ENCODE measurements at regions of chr2 and their contacts with region 1.

Region 1: GRCh38 chr2:241508240-241509154 is at the start of gene STK25:
- DNase-seq: peak; percentile 98
- H3K4me3 ChIP-seq: peak within 1 kb of the TSS; percentile 91 to 99 (median 95)
- H3K27ac ChIP-seq: peak within 1 kb of the TSS; percentile 91 to 95 (median 92)
- H3K4me1 ChIP-seq: peaks cover 18 to 30% (median 25%) of the 10 kb centered on the region in 4 donors
- H3K27me3 ChIP-seq: no peaks in the 10 kb centered on the region
- CTCF ChIP-seq: no peak
- EP300 ChIP-seq: no peak
- POLR2A ChIP-seq: peak; percentile 65
- total RNA-seq, gene STK25: 159 to 427 (median 205) TPM

Region 2: DNA sequence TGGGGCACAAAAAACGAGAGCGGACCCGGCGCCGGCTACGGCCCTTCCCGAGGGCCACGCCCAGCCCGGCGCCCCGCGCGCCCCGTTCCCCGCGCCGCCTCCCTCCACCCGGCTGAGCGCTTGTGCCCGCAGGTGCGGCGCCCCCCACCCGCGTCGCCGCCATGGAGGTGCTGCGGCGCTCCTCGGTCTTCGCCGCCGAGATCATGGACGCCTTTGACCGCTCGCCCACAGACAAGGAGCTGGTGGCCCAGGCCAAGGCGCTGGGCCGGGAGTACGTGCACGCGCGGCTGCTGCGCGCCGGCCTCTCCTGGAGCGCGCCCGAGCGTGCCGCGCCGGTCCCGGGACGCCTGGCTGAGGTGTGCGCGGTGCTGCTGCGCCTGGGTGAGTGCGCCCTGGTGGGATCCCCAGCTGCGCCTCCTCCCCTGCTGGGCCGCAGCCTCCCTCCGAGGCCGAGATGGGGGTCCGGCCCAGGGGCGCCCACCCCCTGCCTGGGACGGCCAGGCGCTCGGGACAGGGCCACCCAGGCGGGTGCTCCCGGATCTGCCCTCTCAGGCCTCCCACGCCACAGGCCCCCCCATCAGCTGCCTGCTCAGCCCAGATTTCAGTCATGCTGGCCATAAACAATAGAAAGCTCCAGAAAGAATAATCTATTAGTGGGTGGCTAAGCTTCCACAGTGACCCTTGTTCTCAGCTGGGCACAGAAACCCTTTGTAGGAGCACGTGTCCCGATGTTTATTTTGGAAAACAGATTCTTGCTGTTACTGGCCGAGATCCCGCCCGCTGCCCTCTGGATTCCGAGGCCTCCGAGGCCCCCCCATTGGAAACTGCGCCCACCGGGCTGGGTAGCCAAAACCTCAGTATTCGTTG is 51.1 kb after region 1 on chr2:
- in situ Hi-C with region 1: no loop called
- intact Hi-C with region 1: loop called (anchors 5 kb)
- DNase-seq: peak; percentile 41
- H3K4me3 ChIP-seq: peak overlapping the region; percentile 54 to 80 (median 68)
- H3K27ac ChIP-seq: peak overlapping the region; percentile 68 to 89 (median 88)
- H3K4me1 ChIP-seq: peaks cover 8 to 42% (median 25%) of the 10 kb centered on the region in 4 donors
- H3K27me3 ChIP-seq: peaks cover 26% of the 10 kb centered on the region
- CTCF ChIP-seq: no peak
- EP300 ChIP-seq: no peak
- POLR2A ChIP-seq: no peak

Region 3: GRCh38 chr2:241609859-241610793 is 101.6 kb after region 1 on chr2:
- in situ Hi-C with region 1: no loop called
- intact Hi-C with region 1: loop called (anchors 5 kb)
- DNase-seq: peak; percentile 94
- H3K4me3 ChIP-seq: peak overlapping the region; percentile 25 to 56 (median 44)
- H3K27ac ChIP-seq: peak overlapping the region; percentile 80 to 88 (median 84)
- H3K4me1 ChIP-seq: peaks cover 7 to 39% (median 19%) of the 10 kb centered on the region in 4 donors
- H3K27me3 ChIP-seq: no peaks in the 10 kb centered on the region
- CTCF ChIP-seq: peak; percentile 25 to 72 (median 55)
- EP300 ChIP-seq: no peak
- POLR2A ChIP-seq: peak; percentile 69

Measured in transverse colon (tissue), 4 donors.